PC-9 (cell line): ENCODE measurements at regions of chr6 and their contacts with region 1.

Region 1: DNA sequence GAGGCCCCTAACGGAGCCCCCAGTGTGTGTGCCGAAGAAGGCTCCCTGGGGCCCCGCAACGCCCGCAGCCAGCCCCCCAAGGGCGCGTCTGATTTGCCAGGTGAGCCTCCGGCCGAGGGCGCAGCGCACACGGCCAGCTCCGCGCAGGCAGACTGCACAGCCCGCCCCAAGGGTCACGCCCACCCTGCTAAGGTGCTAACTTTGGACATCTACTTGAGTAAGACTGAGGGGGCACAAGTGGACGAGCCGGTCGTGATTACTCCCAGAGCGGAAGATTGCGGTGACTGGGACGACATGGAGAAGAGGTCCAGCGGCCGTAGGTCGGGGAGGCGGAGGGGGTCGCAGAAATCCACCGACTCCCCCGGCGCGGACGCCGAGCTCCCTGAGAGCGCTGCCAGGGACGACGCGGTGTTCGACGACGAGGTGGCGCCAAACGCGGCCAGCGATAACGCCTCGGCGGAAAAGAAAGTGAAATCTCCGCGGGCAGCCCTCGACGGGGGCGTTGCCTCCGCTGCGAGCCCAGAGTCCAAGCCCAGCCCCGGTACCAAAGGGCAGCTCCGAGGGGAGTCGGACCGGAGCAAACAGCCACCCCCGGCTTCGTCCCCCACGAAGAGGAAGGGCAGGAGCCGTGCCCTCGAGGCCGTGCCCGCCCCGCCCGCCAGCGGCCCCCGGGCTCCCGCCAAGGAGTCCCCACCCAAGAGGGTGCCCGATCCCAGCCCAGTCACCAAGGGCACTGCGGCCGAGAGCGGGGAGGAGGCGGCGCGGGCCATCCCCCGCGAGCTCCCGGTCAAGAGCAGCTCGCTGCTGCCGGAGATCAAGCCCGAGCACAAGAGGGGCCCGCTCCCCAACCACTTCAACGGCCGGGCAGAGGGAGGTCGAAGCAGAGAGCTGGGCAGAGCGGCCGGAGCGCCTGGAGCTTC is 117.0 kb downstream of the RTN4IP1 start:
- DNase-seq: peak; percentile 58 to 75
- H3K4me3 ChIP-seq: peak overlapping the region; percentile 76
- H3K27ac ChIP-seq: peak overlapping the region; percentile 53
- H3K4me1 ChIP-seq: peaks cover 42% of the 10 kb centered on the region
- H3K27me3 ChIP-seq: no peaks in the 10 kb centered on the region
- CTCF ChIP-seq: no peak

Region 2: GRCh38 chr6:106005954-106006353 is 506.4 kb before region 1 on chr6:
- CTCF ChIA-PET with region 1: no interaction called
- POLR2A ChIA-PET with region 1: interaction called, 11 read pairs
- intact Hi-C with region 1: no loop called
- DNase-seq: no peak
- H3K4me3 ChIP-seq: no peak overlapping the region
- H3K27ac ChIP-seq: no peak overlapping the region
- H3K4me1 ChIP-seq: no peaks in the 10 kb centered on the region
- H3K27me3 ChIP-seq: no peaks in the 10 kb centered on the region
- CTCF ChIP-seq: no peak

Region 3: GRCh38 chr6:106244931-106245330 is 267.4 kb before region 1 on chr6:
- CTCF ChIA-PET with region 1: no interaction called
- POLR2A ChIA-PET with region 1: no interaction called
- intact Hi-C with region 1: no loop called
- DNase-seq: no peak
- H3K4me3 ChIP-seq: no peak overlapping the region
- H3K27ac ChIP-seq: no peak overlapping the region
- H3K4me1 ChIP-seq: no peaks in the 10 kb centered on the region
- H3K27me3 ChIP-seq: no peaks in the 10 kb centered on the region
- CTCF ChIP-seq: no peak

Region 4: GRCh38 chr6:106501960-106502371 is 10.3 kb before region 1 on chr6:
- CTCF ChIA-PET with region 1: no interaction called
- POLR2A ChIA-PET with region 1: no interaction called
- intact Hi-C with region 1: no loop called
- DNase-seq: peak in 1 of 2 experiments; percentile 72
- H3K4me3 ChIP-seq: peak overlapping the region; percentile 15; the same call in 1 of the 2 replicates
- H3K27ac ChIP-seq: peak overlapping the region; percentile 86
- H3K4me1 ChIP-seq: peaks cover 35% of the 10 kb centered on the region
- H3K27me3 ChIP-seq: no peaks in the 10 kb centered on the region
- CTCF ChIP-seq: no peak

Region 5: DNA sequence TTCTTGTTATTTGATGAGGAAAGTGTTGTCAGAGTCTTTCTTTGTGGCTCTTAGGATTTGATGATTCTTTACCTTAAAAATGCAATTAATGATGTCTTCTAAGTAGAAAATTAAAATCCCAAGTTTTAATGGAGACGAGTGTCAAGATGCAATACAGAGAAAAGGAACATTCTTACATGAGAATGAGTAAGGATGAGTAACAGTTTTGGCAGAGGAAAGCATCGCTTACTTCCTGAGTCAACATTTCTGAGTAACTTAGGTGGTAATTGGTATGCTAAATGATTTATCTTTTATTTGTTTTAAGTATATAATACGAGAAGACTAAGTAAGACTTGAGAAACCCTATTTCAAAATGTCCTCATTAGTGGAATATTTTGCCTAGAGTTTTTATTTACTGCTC is 15.7 kb after region 1 on chr6:
- CTCF ChIA-PET with region 1: no interaction called
- POLR2A ChIA-PET with region 1: interaction called, 11 read pairs
- intact Hi-C with region 1: no loop called
- DNase-seq: peak in 1 of 2 experiments; percentile 95
- H3K4me3 ChIP-seq: peak overlapping the region; percentile 35; the same call in 1 of the 2 replicates
- H3K27ac ChIP-seq: peak overlapping the region; percentile 98
- H3K4me1 ChIP-seq: peaks cover 54% of the 10 kb centered on the region
- H3K27me3 ChIP-seq: no peaks in the 10 kb centered on the region
- CTCF ChIP-seq: no peak

Region 6: DNA sequence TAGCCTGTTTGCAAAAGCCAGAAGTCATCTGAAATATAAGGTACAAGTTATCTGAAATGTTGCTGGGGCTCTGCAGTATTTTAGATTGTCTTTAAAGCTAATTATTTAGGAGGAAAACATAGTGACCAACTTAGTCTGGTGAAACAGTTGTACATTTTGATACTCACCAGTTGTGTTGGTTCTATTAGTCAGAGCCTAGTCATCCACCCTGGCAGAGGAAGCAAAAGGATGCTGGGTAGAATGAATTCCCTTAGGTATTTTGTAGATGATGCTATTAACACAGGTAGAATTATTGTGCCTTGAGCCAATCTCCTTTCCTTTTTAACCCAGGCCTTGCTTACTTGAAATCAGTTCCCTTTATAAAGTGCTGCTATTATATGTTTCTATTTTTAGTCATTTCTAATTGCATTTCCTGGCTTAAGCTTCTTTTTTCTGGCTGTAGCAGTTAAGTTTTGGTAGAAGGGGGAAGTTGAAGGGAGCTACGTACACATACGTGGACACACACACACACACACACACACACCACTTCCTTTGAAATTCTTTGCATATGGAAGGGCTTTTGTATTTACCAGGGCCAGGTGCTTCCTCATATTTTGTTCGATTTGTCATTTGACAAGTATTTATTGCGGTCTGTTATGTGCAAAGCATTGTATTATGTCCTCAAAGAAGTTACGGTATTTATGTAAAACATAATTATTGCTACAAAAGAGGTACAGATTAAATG is 34.5 kb after region 1 on chr6:
- CTCF ChIA-PET with region 1: interaction called, 3 read pairs
- POLR2A ChIA-PET with region 1: no interaction called
- intact Hi-C with region 1: loop called (anchors 2 kb)
- DNase-seq: peak; percentile 48 to 90
- H3K4me3 ChIP-seq: peak overlapping the region; percentile 3; the same call in 1 of the 2 replicates
- H3K27ac ChIP-seq: peak overlapping the region; percentile 93
- H3K4me1 ChIP-seq: peaks cover 31% of the 10 kb centered on the region
- H3K27me3 ChIP-seq: no peaks in the 10 kb centered on the region
- CTCF ChIP-seq: no peak

Region 7: DNA sequence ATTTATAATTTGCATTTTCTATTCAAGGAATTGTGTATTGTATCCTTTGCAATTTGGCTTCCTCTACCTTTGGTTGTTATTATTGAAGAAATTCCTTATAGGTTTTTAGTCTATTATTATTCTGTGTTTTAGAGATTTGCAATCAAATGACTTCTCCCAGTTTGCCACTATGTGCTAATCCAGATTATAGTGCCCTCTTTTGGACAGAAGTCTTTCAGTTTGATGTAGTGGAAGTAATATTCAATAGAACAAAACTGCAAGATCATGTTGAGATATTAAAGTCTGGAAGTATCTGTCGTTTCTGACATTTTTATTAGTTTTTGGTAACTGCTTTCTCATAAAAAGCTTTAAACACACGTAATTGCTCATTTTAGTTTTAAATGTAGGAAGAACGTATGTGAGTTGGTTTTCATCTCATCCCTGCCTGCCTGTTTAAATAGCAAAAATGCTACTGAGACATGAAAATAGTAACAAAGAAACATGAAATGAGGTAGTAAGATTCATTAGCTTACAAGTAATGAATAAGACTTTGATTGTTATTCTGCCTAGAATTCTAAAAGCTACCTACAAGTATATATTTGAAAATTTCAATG is 44.2 kb after region 1 on chr6:
- CTCF ChIA-PET with region 1: interaction called, 3 read pairs
- POLR2A ChIA-PET with region 1: interaction called, 3 read pairs
- intact Hi-C with region 1: loop called (anchors 2 kb)
- DNase-seq: peak in 1 of 2 experiments; percentile 49
- H3K4me3 ChIP-seq: no peak overlapping the region
- H3K27ac ChIP-seq: no peak overlapping the region
- H3K4me1 ChIP-seq: peaks cover 27% of the 10 kb centered on the region
- H3K27me3 ChIP-seq: no peaks in the 10 kb centered on the region
- CTCF ChIP-seq: peak; percentile 57